Naive thymus-derived CD4-positive, alpha-beta T cell (primary cell): ENCODE measurements at regions of chr6 and their contacts with region 1.

Region 1: DNA sequence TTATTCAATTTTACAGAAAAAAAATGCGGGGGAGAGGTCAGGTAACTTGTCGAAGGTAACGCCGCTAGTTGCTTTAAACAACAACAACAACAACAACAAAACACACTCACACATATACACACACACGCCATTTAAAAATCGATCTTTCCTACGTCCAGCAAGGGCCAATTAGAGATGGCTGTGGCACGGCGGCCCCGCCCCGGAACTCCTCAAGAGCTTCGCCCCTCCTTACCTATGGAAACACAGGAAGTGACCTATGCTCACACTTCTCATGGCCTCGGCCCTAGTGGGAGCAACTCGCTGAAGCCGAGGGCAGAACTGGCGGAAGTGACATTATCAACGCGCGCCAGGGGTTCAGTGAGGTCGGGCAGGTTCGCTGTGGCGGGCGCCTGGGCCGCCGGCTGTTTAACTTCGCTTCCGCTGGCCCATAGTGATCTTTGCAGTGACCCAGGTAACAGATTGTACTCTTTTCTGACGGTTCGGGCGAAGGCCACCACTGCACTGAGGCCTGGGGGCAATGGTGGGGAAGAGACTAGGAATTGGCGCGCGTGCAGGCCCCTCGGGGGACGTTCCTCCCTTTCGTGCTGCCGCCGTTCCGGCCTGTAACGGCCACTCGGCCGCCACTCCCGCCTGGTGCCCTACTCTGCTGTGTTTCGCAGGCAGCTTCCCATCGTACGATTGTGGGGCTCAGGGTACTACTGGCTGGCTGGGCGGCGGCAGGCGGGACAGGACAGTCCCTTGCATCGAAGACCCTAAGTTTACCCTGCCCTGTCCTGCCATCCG is at the start of gene TBP:
- DNase-seq: peak; percentile 90 to 99 (median 97)
- ATAC-seq: peak; percentile 95
- H3K4me3 ChIP-seq: peak within 1 kb of the TSS; percentile 91
- H3K4me3 Mint-ChIP-seq: no peak within 1 kb of the TSS
- H3K27ac ChIP-seq: peak within 1 kb of the TSS; percentile 93
- H3K27ac Mint-ChIP-seq: no peak within 1 kb of the TSS
- H3K4me1 ChIP-seq: peaks cover 38% of the 10 kb centered on the region in 2 donors
- H3K4me1 Mint-ChIP-seq: peaks cover 16 to 46% (median 30%) of the 10 kb centered on the region in 7 donors
- H3K27me3 ChIP-seq: no peaks in the 10 kb centered on the region
- H3K27me3 Mint-ChIP-seq: no peaks in the 10 kb centered on the region
- total RNA-seq, gene TBP: 13.8 to 28.3 (median 23.9) TPM

Region 2: GRCh38 chr6:169654598-169655391 is 899.4 kb before region 1 on chr6:
- CTCF ChIA-PET with region 1: no interaction called
- POLR2A ChIA-PET with region 1: no interaction called
- intact Hi-C with region 1: loop called in 1 of 2 experiments (anchors 2 kb)
- DNase-seq: peak; percentile 59 to 86 (median 73)
- ATAC-seq: peak; percentile 99
- H3K4me3 ChIP-seq: peak overlapping the region; percentile 64
- H3K4me3 Mint-ChIP-seq: peak overlapping the region; percentile 86 to 95 (median 92)
- H3K27ac ChIP-seq: peak overlapping the region; percentile 72
- H3K27ac Mint-ChIP-seq: peak overlapping the region; percentile 71 to 95 (median 89)
- H3K4me1 ChIP-seq: no peaks in the 10 kb centered on the region
- H3K4me1 Mint-ChIP-seq: peaks cover 0 to 19% (median 15%) of the 10 kb centered on the region in 7 donors
- H3K27me3 ChIP-seq: no peaks in the 10 kb centered on the region
- H3K27me3 Mint-ChIP-seq: no peaks in the 10 kb centered on the region

Region 3: GRCh38 chr6:169701954-169702839 is 852.0 kb before region 1 on chr6 and contains the starts of genes C6orf120 and WDR27:
- CTCF ChIA-PET with region 1: no interaction called
- POLR2A ChIA-PET with region 1: interaction called, 22 read pairs
- intact Hi-C with region 1: loop called (anchors 1 kb)
- DNase-seq: peak; percentile 91 to 98 (median 94)
- ATAC-seq: peak; percentile 93
- H3K4me3 ChIP-seq: peak within 1 kb of the TSS; percentile 95
- H3K4me3 Mint-ChIP-seq: peak within 1 kb of the TSS; percentile 89 to 94 (median 92)
- H3K27ac ChIP-seq: peak within 1 kb of the TSS; percentile 98
- H3K27ac Mint-ChIP-seq: peak within 1 kb of the TSS; percentile 88 to 96 (median 93)
- H3K4me1 ChIP-seq: peaks cover 22 to 36% of the 10 kb centered on the region in 2 donors
- H3K4me1 Mint-ChIP-seq: peaks cover 28 to 66% (median 55%) of the 10 kb centered on the region in 7 donors
- H3K27me3 ChIP-seq: no peaks in the 10 kb centered on the region
- H3K27me3 Mint-ChIP-seq: no peaks in the 10 kb centered on the region
- total RNA-seq, gene C6orf120: 16.0 to 38.1 (median 19.3) TPM
- total RNA-seq, gene WDR27: 22.7 to 89.0 (median 41.4) TPM

Region 4: DNA sequence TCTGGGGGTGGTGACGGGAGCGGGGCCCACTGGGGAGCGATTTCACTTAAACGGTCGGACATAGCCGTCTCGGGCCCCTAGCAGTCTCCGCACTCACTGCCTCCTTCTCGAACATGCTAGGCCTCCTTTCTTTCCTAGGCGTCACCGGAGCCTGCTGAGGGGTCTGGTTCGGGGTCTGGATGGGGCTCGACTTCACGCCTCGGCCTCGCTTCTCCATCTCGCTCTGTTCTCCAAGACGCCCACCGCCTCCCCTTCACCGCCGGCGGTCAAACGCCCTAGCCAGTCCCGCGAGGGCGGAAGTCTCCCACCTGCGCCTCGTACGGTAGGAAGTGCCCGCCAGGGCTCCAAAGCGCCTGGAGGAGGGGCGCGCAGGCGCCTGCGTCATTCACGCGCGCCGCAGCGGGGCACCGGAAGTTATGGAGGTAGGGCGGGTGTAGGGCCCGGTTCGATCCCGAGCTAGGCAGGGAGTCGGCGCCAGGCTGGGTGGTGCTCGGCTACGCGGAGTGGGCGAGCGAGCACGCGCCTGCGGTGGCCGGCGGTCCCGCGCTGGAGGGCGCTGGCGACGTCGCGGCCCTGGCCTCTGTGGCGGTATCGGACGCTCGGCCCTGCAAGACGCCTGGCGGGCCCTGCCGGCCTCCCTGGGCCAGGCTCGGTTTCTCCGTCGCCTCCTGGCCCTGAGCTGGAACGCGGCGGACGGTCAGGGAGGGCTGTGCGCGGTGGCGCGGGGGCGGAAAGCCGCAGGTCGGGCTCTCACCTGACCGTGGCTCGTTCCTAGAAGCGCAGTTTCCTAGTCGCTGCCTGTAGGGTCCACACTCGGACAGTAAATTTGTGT is 802.7 kb before region 1 on chr6 and contains the starts of genes DYNLT2 and ERMARD:
- CTCF ChIA-PET with region 1: interaction called, 3 read pairs
- POLR2A ChIA-PET with region 1: interaction called, 40 read pairs
- intact Hi-C with region 1: loop called (anchors 1 kb)
- DNase-seq: peak; percentile 89 to 97 (median 94)
- ATAC-seq: peak; percentile 98
- H3K4me3 ChIP-seq: peak within 1 kb of the TSS; percentile 84
- H3K4me3 Mint-ChIP-seq: peak within 1 kb of the TSS; percentile 92 to 100 (median 98)
- H3K27ac ChIP-seq: peak within 1 kb of the TSS; percentile 92
- H3K27ac Mint-ChIP-seq: peak within 1 kb of the TSS; percentile 96 to 100 (median 100)
- H3K4me1 ChIP-seq: peaks cover 17% of the 10 kb centered on the region in 2 donors
- H3K4me1 Mint-ChIP-seq: peaks cover 21 to 43% (median 37%) of the 10 kb centered on the region in 7 donors
- H3K27me3 ChIP-seq: no peaks in the 10 kb centered on the region
- H3K27me3 Mint-ChIP-seq: peaks cover 0 to 4% (median 0%) of the 10 kb centered on the region in 5 donors
- total RNA-seq, gene DYNLT2: 2.5 to 4.7 (median 4.1) TPM
- total RNA-seq, gene ERMARD: 30.3 to 43.7 (median 35.7) TPM

Region 5: DNA sequence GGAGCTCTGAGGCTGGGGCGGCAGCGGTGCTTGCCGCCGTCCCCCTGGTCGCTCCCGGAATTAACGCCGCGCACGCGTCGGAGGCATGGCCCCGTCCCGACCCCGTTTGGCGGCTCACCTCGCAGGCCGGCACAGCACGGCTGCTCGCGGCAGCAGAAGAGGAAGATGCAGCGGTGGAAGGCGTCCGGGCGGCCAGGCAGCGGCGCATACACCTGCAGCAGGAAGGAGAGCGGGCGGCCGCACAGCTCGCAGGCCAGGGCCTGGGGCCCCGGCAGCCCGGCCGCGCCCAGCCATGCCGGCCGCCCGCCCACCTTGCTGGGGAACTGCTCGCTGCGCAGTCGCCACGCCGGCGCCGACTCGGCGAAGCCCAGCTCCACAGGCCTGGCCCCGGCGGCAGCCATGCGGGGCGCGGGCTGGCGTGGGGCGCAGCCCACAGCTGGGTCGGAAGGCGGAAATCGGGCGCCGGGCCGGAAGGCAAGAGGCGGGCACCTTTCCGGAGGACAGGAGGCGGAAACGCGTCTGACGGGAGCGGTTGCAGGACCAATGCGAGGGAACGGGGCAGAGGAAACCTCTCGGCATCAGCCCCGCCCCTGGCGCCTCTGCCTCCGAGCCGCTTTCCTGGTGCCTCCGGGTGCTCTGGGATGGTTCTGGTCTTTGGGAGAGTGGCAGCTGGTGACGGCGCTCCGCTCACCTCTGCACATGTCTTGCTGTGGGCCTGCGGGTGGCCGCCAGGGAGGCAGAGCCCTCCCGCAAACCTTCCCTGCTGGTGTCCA is 30.2 kb after region 1 on chr6 and contains the start of gene PDCD2:
- CTCF ChIA-PET with region 1: interaction called, 4 read pairs
- POLR2A ChIA-PET with region 1: interaction called, 48 read pairs
- intact Hi-C with region 1: loop called (anchors 1 kb)
- DNase-seq: peak; percentile 82 to 92 (median 91)
- ATAC-seq: peak; percentile 96
- H3K4me3 ChIP-seq: peak within 1 kb of the TSS; percentile 89
- H3K4me3 Mint-ChIP-seq: peak within 1 kb of the TSS; percentile 96 to 100 (median 97)
- H3K27ac ChIP-seq: peak within 1 kb of the TSS; percentile 88
- H3K27ac Mint-ChIP-seq: peak within 1 kb of the TSS; percentile 94 to 99 (median 96)
- H3K4me1 ChIP-seq: peaks cover 8 to 11% of the 10 kb centered on the region in 2 donors
- H3K4me1 Mint-ChIP-seq: peaks cover 14 to 42% (median 37%) of the 10 kb centered on the region in 7 donors
- H3K27me3 ChIP-seq: no peaks in the 10 kb centered on the region
- H3K27me3 Mint-ChIP-seq: peaks cover 0 to 4% (median 0%) of the 10 kb centered on the region in 5 donors
- total RNA-seq, gene PDCD2: 49.4 to 80.1 (median 76.1) TPM